Activated T-helper 2 cell treated with anti-CD3 and anti-CD28 coated beads, Interferon-gamma antibody, Interleukin-2, Interleukin-4, amounts not matched to agents 10 μg/mL and 5 μg/mL and 100 μg/mL, durations not matched to agents 14 hours and 24 hours and 36 hours (primary cell): ENCODE measurements at regions of chr20 and their contacts with region 1.

Region 1: GRCh38 chr20:50115591-50116372 is 2.8 kb upstream of the UBE2V1 start:
- DNase-seq: peak; percentile 86
- H3K4me3 Mint-ChIP-seq: peak overlapping the region; percentile 85
- H3K27ac Mint-ChIP-seq: peak overlapping the region; percentile 95
- H3K4me1 Mint-ChIP-seq: peaks cover 43% of the 10 kb centered on the region
- H3K27me3 Mint-ChIP-seq: no peaks in the 10 kb centered on the region

Region 2: DNA sequence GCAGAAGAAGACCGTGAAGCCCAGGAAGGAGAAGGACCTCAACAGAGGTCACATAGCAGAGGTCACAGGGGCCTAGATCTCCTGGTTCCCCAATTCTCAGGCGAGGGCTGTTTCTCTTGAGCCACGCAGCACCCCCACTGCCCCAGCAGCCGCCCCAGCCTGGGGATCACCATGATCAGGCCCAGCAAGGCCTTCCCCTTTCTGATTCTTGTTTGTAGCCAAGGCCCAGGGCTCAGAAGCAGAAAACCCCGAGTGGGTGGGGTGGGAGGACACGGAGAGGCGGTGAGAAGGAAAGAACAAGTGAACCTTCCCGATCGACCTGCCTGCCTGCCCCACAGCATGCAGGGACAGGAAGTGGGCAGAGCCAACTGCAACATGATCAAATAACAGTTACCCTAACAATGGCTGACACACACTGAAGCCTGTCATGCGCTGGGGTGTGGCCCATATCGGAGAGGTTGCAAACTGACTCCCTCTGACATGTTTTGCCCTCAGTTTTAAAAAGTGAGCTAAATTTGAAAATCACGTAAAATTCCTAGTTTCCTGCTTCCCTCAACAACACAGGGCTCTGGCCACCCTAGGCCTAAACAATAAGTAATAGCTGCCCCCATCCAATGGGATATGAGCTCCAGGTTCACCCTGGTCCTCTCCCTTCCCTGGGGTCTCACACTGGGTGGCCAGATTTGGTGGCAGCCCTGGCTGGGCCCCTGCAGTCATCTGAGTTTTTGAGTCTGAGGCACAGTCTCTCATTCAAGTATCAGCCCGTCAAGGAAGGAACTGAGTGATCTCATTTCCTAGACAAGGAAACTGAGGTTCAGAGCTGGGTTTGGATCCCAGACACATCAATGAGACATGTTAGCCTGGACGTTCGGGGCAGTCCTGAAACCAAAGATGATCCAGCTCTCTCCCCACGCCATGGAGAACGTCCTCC is 31.2 kb after region 1 on chr20:
- intact Hi-C with region 1: loop called (anchors 2 kb)
- DNase-seq: peak; percentile 76
- H3K4me3 Mint-ChIP-seq: peak overlapping the region; percentile 75
- H3K27ac Mint-ChIP-seq: peak overlapping the region; percentile 96
- H3K4me1 Mint-ChIP-seq: peaks cover 52% of the 10 kb centered on the region
- H3K27me3 Mint-ChIP-seq: no peaks in the 10 kb centered on the region

Region 3: GRCh38 chr20:50516180-50516934 is 400.6 kb after region 1 on chr20:
- intact Hi-C with region 1: loop called (anchors 5 kb)
- DNase-seq: no peak
- H3K4me3 Mint-ChIP-seq: peak overlapping the region; percentile 62
- H3K27ac Mint-ChIP-seq: peak overlapping the region; percentile 95
- H3K4me1 Mint-ChIP-seq: peaks cover 86% of the 10 kb centered on the region
- H3K27me3 Mint-ChIP-seq: no peaks in the 10 kb centered on the region